ENCODE measurements at regions of chr4 and their contacts with region 1.

Region 1: GRCh38 chr4:24730256-24731001 is 64.9 kb upstream of the SOD3 start:
- DNase-seq: peak; percentile 63 to 94
- H3K4me3 ChIP-seq: no peak overlapping the region
- H3K27ac ChIP-seq: peak overlapping the region; percentile 63 to 78
- H3K4me1 ChIP-seq: peaks cover 3 to 40% of the 10 kb centered on the region in 2 donors
- H3K27me3 ChIP-seq: no peaks in the 10 kb centered on the region
- CTCF ChIP-seq: peak in 1 of 3 experiments; percentile 13

Region 2: GRCh38 chr4:24705016-24705753 is 25.2 kb before region 1 on chr4:
- intact Hi-C with region 1: no loop called
- DNase-seq: no peak
- H3K4me3 ChIP-seq: no peak overlapping the region
- H3K27ac ChIP-seq: no peak overlapping the region
- H3K4me1 ChIP-seq: no peaks in the 10 kb centered on the region
- H3K27me3 ChIP-seq: no peaks in the 10 kb centered on the region
- CTCF ChIP-seq: no peak

Region 3: GRCh38 chr4:24850674-24851073 is 120.2 kb after region 1 on chr4:
- intact Hi-C with region 1: loop called (anchors 2 kb)
- DNase-seq: peak in 1 of 2 donors; percentile 90
- H3K4me3 ChIP-seq: no peak overlapping the region
- H3K27ac ChIP-seq: peak overlapping the region; percentile 69 to 79
- H3K4me1 ChIP-seq: peaks cover 10 to 37% of the 10 kb centered on the region in 2 donors
- H3K27me3 ChIP-seq: no peaks in the 10 kb centered on the region
- CTCF ChIP-seq: no peak

Region 4: GRCh38 chr4:26126143-26126718 is 1395.8 kb after region 1 on chr4:
- intact Hi-C with region 1: no loop called
- DNase-seq: no peak
- H3K4me3 ChIP-seq: no peak overlapping the region
- H3K27ac ChIP-seq: no peak overlapping the region
- H3K4me1 ChIP-seq: no peaks in the 10 kb centered on the region
- H3K27me3 ChIP-seq: no peaks in the 10 kb centered on the region
- CTCF ChIP-seq: no peak

Measured in ascending aorta (tissue), 2 donors.